ENCODE measurements at regions of chr12 and their contacts with region 1.

Region 1: DNA sequence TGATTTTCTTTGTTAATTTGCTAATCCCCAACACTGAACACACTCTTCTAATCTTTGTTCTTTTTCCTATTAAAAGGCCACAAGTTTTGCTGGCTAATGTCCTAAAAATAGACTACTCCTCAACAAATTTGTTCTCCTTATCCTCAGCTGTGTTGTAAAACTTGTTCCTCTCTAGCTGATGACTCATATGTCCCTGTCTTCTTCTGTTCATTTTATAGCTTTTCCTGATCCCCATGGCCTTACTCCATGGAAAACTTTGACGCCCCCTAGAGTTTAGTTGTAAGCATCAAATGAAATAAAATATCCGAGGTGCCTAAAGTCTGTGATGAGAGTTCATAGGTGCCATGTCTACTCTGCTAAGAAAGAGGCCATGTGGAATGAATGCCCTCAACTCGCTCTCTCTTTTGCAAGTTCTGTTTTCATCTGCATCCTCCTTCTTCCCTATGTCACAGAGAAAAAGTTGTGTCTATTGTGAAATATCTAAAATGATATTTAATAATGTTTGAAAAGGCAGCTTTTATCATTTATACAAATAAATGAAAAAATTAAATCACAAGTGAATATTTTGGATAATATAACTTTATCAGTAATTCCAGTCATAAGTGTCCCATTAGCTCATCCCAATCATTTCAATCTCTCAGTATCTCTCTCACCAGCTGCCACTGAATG is 237.9 kb downstream of the IPO8 start:
- DNase-seq: no peak
- H3K4me3 ChIP-seq: no peak overlapping the region
- H3K27ac ChIP-seq: no peak overlapping the region
- H3K4me1 ChIP-seq: peaks cover 0 to 4% (median 0%) of the 10 kb centered on the region in 4 experiments; a peak in 1 of 7 replicates
- H3K27me3 ChIP-seq: no peaks in the 10 kb centered on the region
- CTCF ChIP-seq: peak in 2 of 3 experiments; percentile 27 to 34; a peak in 2 of 4 replicates
- EP300 ChIP-seq: no peak
- POLR2A ChIP-seq: no peak
- RAD21 ChIP-seq: peak; percentile 45 to 57

Region 2: DNA sequence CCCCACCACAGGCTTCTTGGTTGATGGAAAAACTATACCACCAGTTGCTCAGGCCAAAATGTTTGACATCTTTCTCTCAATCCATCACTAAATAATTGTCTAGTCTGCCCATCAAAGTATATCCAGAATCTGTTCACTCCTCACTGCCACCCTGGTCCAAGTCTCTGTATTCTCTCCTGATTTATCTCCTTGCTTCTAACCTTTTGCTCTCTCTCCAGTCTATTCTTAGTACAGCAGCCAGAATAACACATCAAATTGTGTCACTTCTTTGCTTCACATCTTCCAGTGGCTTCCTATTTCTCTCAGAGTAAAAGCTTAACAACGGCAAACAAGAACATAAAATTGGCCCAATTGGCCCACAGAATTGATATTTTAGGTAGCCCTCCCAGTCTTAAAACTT is 34.9 kb before region 1 on chr12:
- CTCF ChIA-PET with region 1: no interaction called
- POLR2A ChIA-PET with region 1: no interaction called
- DNase-seq: no peak
- H3K4me3 ChIP-seq: no peak overlapping the region
- H3K27ac ChIP-seq: no peak overlapping the region
- H3K4me1 ChIP-seq: no peaks in the 10 kb centered on the region
- H3K27me3 ChIP-seq: peaks cover 0 to 1% (median 0%) of the 10 kb centered on the region in 4 experiments; a peak in 1 of 7 replicates
- CTCF ChIP-seq: no peak
- EP300 ChIP-seq: no peak
- POLR2A ChIP-seq: no peak
- RAD21 ChIP-seq: no peak

Region 3: GRCh38 chr12:30440826-30441602 is 16.7 kb before region 1 on chr12:
- CTCF ChIA-PET with region 1: interaction called, 37 read pairs
- POLR2A ChIA-PET with region 1: no interaction called
- DNase-seq: no peak
- H3K4me3 ChIP-seq: no peak overlapping the region
- H3K27ac ChIP-seq: no peak overlapping the region
- H3K4me1 ChIP-seq: no peaks in the 10 kb centered on the region
- H3K27me3 ChIP-seq: no peaks in the 10 kb centered on the region
- CTCF ChIP-seq: peak in 2 of 3 experiments; percentile 44 to 66; a peak in 2 of 4 replicates
- EP300 ChIP-seq: no peak
- POLR2A ChIP-seq: no peak
- RAD21 ChIP-seq: peak; percentile 40 to 56; a peak in 3 of 4 replicates

Measured in H1 (cell line).